IMR-90 (cell line): ENCODE measurements at regions of chr7 and their contacts with region 1.

Region 1: DNA sequence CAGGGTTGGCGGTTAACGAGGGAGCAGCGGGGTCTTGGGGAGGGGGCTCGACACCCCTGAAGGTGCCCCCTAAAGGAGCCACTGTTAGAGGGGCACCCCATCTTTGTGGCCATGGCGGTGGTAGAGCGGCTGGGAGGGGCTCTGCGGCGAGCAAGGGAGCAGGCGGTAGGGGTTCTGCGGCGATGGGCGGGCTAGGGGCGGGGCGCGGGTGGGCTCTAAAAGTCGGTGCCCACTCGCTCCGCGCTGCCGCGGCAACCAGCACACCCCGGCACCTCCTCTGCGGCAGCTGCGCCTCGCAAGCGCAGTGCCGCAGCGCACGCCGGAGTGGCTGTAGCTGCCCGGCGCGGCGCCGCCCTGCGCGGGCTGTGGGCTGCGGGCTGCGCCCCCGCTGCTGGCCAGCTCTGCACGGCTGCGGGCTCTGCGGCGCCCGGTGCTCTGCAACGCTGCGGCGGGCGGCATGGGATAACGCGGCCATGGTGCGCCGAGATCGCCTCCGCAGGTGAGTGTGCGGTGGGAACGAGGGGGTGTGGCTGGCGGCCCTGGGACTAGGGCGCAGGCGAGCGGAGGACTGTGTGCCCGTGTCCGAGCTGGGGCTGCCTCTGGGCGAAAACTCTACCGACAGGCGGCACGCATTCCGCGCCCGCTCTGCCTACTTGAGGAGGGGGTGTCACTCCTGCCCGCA is at the start of gene MEST:
- DNase-seq: peak; percentile 47
- ATAC-seq: peak; percentile 61
- H3K4me3 ChIP-seq: peak within 1 kb of the TSS; percentile 71
- H3K27ac ChIP-seq: peak within 1 kb of the TSS; percentile 45
- H3K4me1 ChIP-seq: peaks cover 11% of the 10 kb centered on the region
- H3K27me3 ChIP-seq: no peaks in the 10 kb centered on the region
- CTCF ChIP-seq: no peak
- POLR2A ChIP-seq: 0 out of 2 replicates have a peak, but pooled peaks have one; percentile 22
- RAD21 ChIP-seq: no peak
- total RNA-seq, gene MEST: 231 and 317 TPM in 2 replicates

Region 2: GRCh38 chr7:130205084-130205947 is 286.7 kb before region 1 on chr7 and contains the start of gene TMEM209:
- CTCF ChIA-PET with region 1: no interaction called
- POLR2A ChIA-PET with region 1: no interaction called
- dilution Hi-C with region 1: no loop called
- in situ Hi-C with region 1: no loop called
- intact Hi-C with region 1: loop called (anchors 1 kb)
- DNase-seq: peak; percentile 96
- ATAC-seq: peak; percentile 93
- H3K4me3 ChIP-seq: peak within 1 kb of the TSS; percentile 72
- H3K27ac ChIP-seq: peak within 1 kb of the TSS; percentile 89
- H3K4me1 ChIP-seq: peaks cover 3% of the 10 kb centered on the region
- H3K27me3 ChIP-seq: no peaks in the 10 kb centered on the region
- CTCF ChIP-seq: no peak
- POLR2A ChIP-seq: peak; percentile 83
- RAD21 ChIP-seq: no peak; the same call in 1 of the 2 replicates
- total RNA-seq, gene TMEM209: 11.1 and 11.3 TPM in 2 replicates

Region 3: GRCh38 chr7:130421684-130422083 is 70.3 kb before region 1 on chr7:
- CTCF ChIA-PET with region 1: no interaction called
- POLR2A ChIA-PET with region 1: no interaction called
- dilution Hi-C with region 1: no loop called
- in situ Hi-C with region 1: no loop called
- intact Hi-C with region 1: no loop called
- DNase-seq: peak; percentile 37
- ATAC-seq: peak; percentile 61
- H3K4me3 ChIP-seq: no peak overlapping the region
- H3K27ac ChIP-seq: no peak overlapping the region
- H3K4me1 ChIP-seq: peaks cover 2% of the 10 kb centered on the region; the same call in 1 of the 2 replicates
- H3K27me3 ChIP-seq: no peaks in the 10 kb centered on the region
- CTCF ChIP-seq: no peak
- POLR2A ChIP-seq: no peak
- RAD21 ChIP-seq: no peak